Activated T-helper 1 cell treated with anti-CD3 and anti-CD28 coated beads, Interleukin-12 subunit alpha, Interleukin-12 subunit beta, Interleukin-2, Interleukin-4 antibody, amounts not matched to agents 30 ng/mL and 10 ng/mL and 1 ng/mL, durations not matched to agents 14 hours and 24 hours and 36 hours (primary cell): ENCODE measurements at regions of chr6 and their contacts with region 1.

Region 1: GRCh38 chr6:135497412-135498269 is at the start of gene AHI1:
- DNase-seq: peak; percentile 85
- H3K4me3 Mint-ChIP-seq: no peak within 1 kb of the TSS
- H3K27ac Mint-ChIP-seq: no peak within 1 kb of the TSS
- H3K4me1 Mint-ChIP-seq: peaks cover 20% of the 10 kb centered on the region
- H3K27me3 Mint-ChIP-seq: no peaks in the 10 kb centered on the region
- total RNA-seq, gene AHI1: 142 and 146 TPM in 2 replicates

Region 2: GRCh38 chr6:134436281-134436815 is 1061.3 kb before region 1 on chr6:
- intact Hi-C with region 1: loop called (anchors 5 kb)
- DNase-seq: peak; percentile 74
- H3K4me3 Mint-ChIP-seq: peak overlapping the region; percentile 55
- H3K27ac Mint-ChIP-seq: peak overlapping the region; percentile 99
- H3K4me1 Mint-ChIP-seq: peaks cover 41% of the 10 kb centered on the region
- H3K27me3 Mint-ChIP-seq: no peaks in the 10 kb centered on the region

Region 3: DNA sequence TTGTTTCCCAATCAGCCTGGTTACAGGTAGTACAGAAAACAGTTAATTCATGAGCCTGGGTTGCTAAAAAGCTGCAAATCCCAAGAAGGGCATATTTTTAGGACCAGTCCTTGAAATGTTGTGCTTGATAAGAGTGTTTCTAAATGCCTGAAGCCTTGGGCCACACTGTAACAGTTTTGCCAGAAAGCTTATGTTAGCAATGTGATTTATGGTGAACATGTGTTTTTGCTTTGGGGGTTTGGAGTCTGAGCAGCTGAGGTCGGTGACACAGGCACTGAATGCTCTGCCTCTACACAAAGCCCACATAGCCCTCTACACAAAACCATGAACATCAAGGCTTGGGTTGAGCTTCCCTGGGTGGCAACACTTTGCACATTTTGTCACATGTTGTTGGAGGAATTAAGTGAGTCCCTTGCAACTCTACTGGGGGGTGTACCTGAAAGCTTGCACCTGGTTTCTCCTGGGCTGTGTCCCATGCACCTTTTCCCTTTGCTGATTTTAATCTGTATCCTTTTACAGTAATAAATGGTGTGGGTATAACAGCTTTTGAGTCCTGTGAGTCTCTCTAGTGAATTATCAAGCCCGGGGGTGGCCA is 22.3 kb before region 1 on chr6:
- intact Hi-C with region 1: no loop called
- DNase-seq: no peak
- H3K4me3 Mint-ChIP-seq: no peak overlapping the region
- H3K27ac Mint-ChIP-seq: no peak overlapping the region
- H3K4me1 Mint-ChIP-seq: no peaks in the 10 kb centered on the region
- H3K27me3 Mint-ChIP-seq: no peaks in the 10 kb centered on the region

Region 4: DNA sequence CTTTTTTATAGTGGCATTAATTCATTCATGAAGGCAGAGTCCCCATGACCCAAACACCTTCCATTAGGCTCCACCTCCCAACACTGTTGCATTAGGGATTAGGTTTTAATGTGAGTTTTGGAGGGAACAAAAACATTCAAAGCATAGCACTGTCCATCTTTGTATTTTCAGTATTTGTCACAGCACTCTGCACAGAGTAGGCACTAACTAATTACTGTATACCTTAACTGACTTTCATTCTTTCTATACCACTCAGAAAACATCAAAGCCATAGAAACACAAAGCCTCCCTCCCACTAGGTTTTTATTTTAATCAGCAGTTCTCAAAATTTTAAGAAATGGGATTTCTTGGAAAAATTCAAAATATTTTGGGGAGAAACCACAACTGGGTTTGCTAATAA is 21.7 kb after region 1 on chr6:
- intact Hi-C with region 1: loop called (anchors 1 kb)
- DNase-seq: no peak
- H3K4me3 Mint-ChIP-seq: no peak overlapping the region
- H3K27ac Mint-ChIP-seq: no peak overlapping the region
- H3K4me1 Mint-ChIP-seq: peaks cover 29% of the 10 kb centered on the region
- H3K27me3 Mint-ChIP-seq: no peaks in the 10 kb centered on the region

Region 5: DNA sequence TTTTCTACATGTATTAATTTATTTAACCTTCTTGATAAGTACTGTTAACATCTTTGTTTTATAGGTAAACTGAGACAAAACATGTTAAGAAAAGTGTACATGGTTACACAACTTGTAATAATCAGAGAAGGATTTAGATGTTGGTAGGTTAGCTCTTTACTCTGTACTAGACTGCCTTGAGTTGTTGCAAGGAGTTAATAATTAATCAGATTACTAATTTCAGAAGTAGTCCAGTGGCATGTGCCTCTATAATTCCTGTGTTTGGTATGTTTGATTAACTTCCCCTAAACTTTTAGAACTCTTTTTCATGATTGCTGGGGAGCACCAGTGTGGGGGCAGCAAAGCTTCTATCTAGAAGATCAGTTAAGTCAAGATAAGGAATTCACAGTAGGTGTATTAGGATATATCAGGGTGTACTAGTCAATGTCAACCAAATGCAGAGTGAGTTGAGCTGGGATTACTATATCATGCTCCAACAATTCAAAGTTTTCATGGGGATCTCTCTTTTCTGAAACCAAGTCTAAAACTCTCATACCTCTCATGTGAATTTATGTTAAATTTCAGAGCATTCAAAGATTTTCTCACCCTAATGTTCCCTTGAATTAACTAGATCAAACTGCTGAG is 129.6 kb after region 1 on chr6:
- intact Hi-C with region 1: loop called (anchors 1 kb)
- DNase-seq: no peak
- H3K4me3 Mint-ChIP-seq: no peak overlapping the region
- H3K27ac Mint-ChIP-seq: peak overlapping the region; percentile 68
- H3K4me1 Mint-ChIP-seq: peaks cover 80% of the 10 kb centered on the region
- H3K27me3 Mint-ChIP-seq: no peaks in the 10 kb centered on the region

Region 6: DNA sequence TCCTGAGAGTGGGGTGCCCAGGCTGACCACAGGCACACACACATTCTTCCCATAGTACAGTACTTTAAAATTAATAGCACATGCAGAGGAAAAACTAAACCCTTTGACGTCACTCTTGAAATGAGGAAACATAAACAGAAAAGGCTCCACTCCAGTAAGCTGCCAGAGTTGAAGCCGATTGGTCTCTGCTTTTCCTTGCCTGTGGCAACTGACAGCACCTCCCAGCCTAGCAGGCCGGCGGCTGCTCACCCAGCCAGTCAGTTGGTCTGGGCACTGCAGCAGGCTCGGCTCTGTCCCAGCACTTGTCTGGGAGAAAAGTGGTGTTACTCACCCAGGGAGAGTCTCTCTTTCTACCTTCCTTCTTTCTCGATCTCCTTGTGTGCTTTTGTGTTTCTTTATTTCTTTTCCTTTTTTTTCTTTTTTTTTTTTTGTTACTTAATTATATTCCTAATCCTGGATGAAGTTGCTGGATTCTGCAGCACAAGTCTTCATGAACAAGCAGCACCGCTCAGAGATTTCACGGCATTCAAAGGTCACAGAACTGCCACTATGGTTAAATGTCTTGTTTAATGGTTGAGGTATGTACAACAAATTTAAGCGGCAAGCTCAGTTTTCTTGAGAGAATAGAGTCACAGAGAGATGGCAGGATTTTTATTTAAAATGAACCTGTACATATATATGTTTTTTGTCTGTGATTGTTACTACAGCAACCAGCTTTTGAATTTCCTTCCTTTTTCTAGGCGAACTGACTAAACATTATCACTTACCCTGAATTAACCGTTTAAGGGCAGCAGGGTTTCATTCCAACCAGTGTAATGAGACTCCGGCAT is 354.0 kb after region 1 on chr6 and contains the start of gene PDE7B:
- intact Hi-C with region 1: loop called (anchors 5 kb)
- DNase-seq: peak; percentile 52
- H3K4me3 Mint-ChIP-seq: peak within 1 kb of the TSS; percentile 88
- H3K27ac Mint-ChIP-seq: peak within 1 kb of the TSS; percentile 88
- H3K4me1 Mint-ChIP-seq: peaks cover 47% of the 10 kb centered on the region
- H3K27me3 Mint-ChIP-seq: peaks cover 5% of the 10 kb centered on the region
- total RNA-seq, gene PDE7B: 10.7 and 11.1 TPM in 2 replicates

Region 7: DNA sequence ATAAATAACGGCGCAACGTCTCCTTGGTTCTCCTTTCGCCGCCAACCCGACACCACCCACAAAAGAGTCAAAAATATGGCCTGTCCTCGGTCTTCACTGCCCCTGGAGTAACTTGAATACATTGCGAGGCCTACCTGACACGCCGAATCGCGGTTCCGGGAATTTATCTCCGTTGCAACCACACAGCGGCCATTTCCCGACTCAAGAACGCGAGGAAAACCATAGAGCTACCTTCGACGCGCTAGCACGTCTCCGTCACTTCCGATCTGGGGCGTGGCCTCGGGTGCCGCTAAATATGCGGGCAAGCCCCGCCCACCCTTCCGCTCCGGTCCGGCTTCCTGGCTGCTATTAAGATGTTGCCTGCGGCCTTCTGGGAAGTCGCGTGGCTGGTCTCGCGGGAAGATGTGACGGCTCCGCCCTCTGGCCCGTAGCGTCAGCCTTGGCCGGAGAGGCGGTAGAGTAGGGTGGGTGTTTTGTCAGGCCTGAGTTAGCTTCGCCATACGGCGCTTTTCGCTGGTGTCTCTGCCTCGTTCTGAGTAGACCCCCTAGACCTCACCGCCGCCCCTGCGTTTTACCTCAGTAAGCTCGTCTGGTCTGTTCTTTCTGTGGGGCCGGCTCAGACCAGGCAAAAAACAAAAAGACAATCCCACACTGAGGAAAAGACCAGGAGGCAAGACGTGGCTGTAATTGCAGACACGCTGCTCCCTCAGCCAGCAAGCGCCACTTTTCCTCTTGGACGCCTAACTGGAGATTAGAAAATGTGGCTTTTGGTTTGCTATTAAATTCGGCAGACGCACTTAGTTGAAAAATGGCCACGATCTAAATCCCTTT is 792.2 kb after region 1 on chr6 and contains the start of gene BCLAF1:
- intact Hi-C with region 1: loop called (anchors 1 kb)
- DNase-seq: peak; percentile 100
- H3K4me3 Mint-ChIP-seq: peak within 1 kb of the TSS; percentile 98
- H3K27ac Mint-ChIP-seq: peak within 1 kb of the TSS; percentile 99
- H3K4me1 Mint-ChIP-seq: peaks cover 48% of the 10 kb centered on the region
- H3K27me3 Mint-ChIP-seq: peaks cover 2% of the 10 kb centered on the region
- total RNA-seq, gene BCLAF1: 233 and 237 TPM in 2 replicates

Region 8: DNA sequence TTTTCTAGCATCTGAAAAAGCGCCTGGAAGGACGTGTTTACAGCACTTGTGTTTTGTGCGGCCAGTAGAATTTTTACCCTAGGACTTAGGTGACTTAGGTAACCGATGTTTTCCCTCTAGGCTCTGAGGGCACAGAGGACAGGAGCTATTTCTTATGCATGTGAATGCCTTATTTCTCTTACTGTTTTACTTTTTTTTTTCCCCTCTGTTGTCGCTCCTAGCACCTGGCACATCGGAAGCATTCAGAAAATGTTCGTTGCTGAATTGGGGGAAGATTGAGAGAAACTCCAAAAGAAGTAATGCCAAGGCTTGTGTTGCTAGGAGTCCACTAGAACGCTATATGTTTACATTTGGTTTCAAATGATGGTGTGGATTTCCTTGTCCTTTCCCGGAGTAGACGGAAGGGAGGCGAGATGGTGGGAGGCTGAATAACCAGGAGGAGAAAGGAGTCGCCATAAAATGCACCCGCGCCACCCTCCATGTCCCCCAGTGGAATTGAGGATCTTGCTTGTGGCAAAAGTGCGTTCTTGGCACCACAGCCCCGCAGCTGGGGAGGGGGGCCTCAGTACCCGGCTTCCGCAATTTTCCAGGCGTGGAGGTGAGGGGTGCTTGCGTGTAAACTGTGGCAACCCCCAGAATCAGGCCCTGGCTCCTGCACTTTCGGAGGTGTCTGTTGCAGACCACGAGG is 1989.7 kb after region 1 on chr6:
- intact Hi-C with region 1: no loop called
- DNase-seq: no peak
- H3K4me3 Mint-ChIP-seq: peak overlapping the region; percentile 58
- H3K27ac Mint-ChIP-seq: peak overlapping the region; percentile 86
- H3K4me1 Mint-ChIP-seq: peaks cover 13% of the 10 kb centered on the region
- H3K27me3 Mint-ChIP-seq: peaks cover 80% of the 10 kb centered on the region